Lower leg skin (tissue), 4 donors: ENCODE measurements at regions of chr12 and their contacts with region 1.

Region 1: DNA sequence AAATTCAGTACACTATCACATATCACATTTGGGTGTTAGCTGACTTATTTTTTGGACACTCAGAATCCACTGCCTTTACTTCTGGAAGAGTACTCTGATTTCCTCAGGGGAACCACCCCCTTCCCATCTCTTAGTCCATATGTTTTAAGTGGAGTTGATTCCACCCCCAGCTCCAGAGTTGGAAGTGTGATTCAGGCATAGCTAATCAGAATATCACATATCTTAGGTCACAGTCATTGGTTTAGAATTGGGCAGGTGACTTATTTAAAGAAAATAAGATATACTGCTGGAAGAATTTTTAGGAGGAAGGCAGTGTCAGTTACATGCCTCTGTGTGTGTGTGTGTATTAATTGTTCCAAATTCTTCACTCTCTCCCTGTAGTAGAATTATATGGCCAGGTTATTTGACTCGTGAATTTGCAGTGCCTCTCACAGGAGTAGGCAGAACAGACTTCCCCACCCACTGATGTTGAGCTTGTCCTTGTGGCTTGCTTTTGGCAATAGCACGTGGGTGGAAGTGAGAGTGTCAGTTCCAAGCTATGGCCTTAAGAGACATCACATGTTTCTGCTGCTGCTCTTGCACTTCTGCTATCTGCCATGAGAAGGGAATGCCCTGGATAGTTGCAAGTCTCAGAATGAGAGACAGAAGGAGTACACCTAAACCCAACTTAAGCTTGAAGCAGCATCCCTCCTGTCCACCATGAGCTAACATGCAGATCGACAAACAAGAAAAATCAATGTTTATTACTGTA is 6.4 kb upstream of the GAS2L3 start:
- DNase-seq: peak in 1 of 2 donors; percentile 41
- H3K4me3 ChIP-seq: no peak overlapping the region
- CTCF ChIP-seq: no peak
- POLR2A ChIP-seq: no peak

Region 2: GRCh38 chr12:100138048-100138802 is 428.8 kb before region 1 on chr12:
- intact Hi-C with region 1: loop called (anchors 10 kb)
- DNase-seq: no peak
- H3K4me3 ChIP-seq: no peak overlapping the region
- CTCF ChIP-seq: no peak
- POLR2A ChIP-seq: no peak

Region 3: DNA sequence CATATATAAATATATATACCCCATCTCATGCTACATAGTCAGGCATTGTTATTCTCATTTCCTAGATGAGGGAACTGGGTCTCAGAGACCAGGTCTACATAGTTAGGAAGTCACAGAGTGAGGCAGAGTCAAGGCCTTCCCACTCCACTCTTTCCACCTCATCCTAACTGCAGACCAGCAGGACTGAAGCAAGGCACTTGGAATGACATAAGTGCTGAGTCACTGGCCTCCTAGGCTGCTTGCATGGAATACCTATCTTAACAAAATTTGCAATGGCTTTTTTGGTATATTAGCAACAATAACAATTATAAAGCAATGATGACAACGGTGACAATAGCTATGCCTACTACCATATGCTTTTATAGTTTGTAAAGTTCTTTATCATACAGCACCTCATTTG is 222.1 kb after region 1 on chr12:
- intact Hi-C with region 1: loop called (anchors 5 kb)
- DNase-seq: no peak
- H3K4me3 ChIP-seq: no peak overlapping the region
- CTCF ChIP-seq: no peak
- POLR2A ChIP-seq: no peak